ENCODE measurements at regions of chr17 and their contacts with region 1.

Region 1: GRCh38 chr17:51029568-51030463 is 90.9 kb downstream of the SPAG9 start:
- DNase-seq: no peak
- H3K4me3 ChIP-seq: peak overlapping the region in 1 of 2 experiments; percentile 24; a peak in 3 of 4 replicates
- H3K27ac ChIP-seq: peak overlapping the region; percentile 18 to 59; a peak in 2 of 4 replicates
- H3K4me1 ChIP-seq: peaks cover under 1 to 11% of the 10 kb centered on the region in 2 experiments; a peak in 3 of 4 replicates
- H3K27me3 ChIP-seq: no peaks in the 10 kb centered on the region
- CTCF ChIP-seq: no peak
- EP300 ChIP-seq: no peak
- RAD21 ChIP-seq: no peak

Region 2: GRCh38 chr17:50893183-50893993 is 136.4 kb before region 1 on chr17:
- CTCF ChIA-PET with region 1: no interaction called
- POLR2A ChIA-PET with region 1: no interaction called
- DNase-seq: no peak
- H3K4me3 ChIP-seq: no peak overlapping the region
- H3K27ac ChIP-seq: no peak overlapping the region
- H3K4me1 ChIP-seq: peaks cover 0 to 9% of the 10 kb centered on the region in 2 experiments; a peak in 1 of 4 replicates
- H3K27me3 ChIP-seq: no peaks in the 10 kb centered on the region
- CTCF ChIP-seq: no peak
- EP300 ChIP-seq: no peak
- RAD21 ChIP-seq: no peak

Region 3: GRCh38 chr17:50944054-50944901 is 85.5 kb before region 1 on chr17:
- CTCF ChIA-PET with region 1: no interaction called
- POLR2A ChIA-PET with region 1: no interaction called
- DNase-seq: peak; percentile 92
- H3K4me3 ChIP-seq: peak overlapping the region; percentile 9 to 21; a peak in 3 of 4 replicates
- H3K27ac ChIP-seq: peak overlapping the region; percentile 25 to 85; a peak in 3 of 4 replicates
- H3K4me1 ChIP-seq: peaks cover 10 to 55% of the 10 kb centered on the region in 2 experiments; a peak in 3 of 4 replicates
- H3K27me3 ChIP-seq: no peaks in the 10 kb centered on the region
- CTCF ChIP-seq: no peak
- EP300 ChIP-seq: peak; percentile 29 to 44; a peak in 1 of 4 replicates
- RAD21 ChIP-seq: no peak

Region 4: GRCh38 chr17:51046514-51047384 is 16.9 kb after region 1 on chr17:
- CTCF ChIA-PET with region 1: interaction called, 19 read pairs
- POLR2A ChIA-PET with region 1: no interaction called
- DNase-seq: peak; percentile 84
- H3K4me3 ChIP-seq: peak overlapping the region; percentile 56 to 60
- H3K27ac ChIP-seq: peak overlapping the region; percentile 71 to 94
- H3K4me1 ChIP-seq: peaks cover 26 to 32% of the 10 kb centered on the region in 2 experiments
- H3K27me3 ChIP-seq: no peaks in the 10 kb centered on the region
- CTCF ChIP-seq: no peak; the same call in 1 of the 2 replicates
- EP300 ChIP-seq: peak in 1 of 2 experiments; percentile 57; a peak in 2 of 4 replicates
- RAD21 ChIP-seq: no peak